ENCODE measurements at regions of chr1 and their contacts with region 1.

Region 1: DNA sequence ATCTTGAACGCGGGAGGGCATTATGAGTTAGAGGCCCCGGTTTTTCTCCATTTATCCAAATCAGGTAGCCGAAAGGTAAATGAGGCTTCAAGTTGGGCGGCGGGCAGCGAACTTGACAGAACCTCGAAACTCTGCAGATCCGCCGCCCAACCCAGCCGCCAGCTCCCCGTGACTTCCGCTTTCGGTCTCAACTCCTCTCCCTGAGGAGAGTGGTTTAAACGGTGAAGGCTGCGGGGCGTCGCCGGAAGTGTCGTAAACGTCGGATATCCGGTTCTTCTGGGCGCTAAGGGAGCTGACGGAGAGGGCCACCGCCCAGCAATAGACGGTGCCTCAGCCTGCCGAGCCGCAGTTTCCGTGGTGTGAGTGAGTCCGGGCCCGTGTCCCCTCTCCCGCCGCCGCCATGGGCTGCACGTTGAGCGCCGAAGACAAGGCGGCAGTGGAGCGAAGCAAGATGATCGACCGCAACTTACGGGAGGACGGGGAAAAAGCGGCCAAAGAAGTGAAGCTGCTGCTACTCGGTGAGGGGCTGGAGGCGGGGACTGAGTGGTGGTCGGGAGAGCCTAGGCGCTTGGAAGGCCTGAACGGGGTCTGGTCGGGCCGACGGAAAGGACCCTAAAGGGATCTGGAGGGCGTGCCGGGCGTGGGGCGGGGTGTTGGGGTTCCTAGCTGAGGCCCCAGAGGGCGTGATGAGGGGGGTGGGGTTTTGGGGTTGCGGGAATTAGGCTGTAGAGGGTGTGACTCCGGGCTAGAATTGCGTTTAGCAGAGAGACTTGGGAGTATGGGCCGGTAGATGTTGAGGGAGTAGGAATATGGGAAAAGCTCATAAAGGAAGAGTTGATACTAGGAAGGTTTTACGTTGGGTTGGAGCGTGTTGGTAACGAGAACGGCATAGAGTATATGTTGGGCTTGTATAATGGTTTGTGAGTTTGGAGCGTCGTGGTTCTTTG is at the start of gene GNAI3:
- DNase-seq: peak; percentile 94 to 99 (median 97)
- H3K4me3 ChIP-seq: peak within 1 kb of the TSS; percentile 26 to 85 (median 66)
- H3K27ac ChIP-seq: peak within 1 kb of the TSS; percentile 79 to 94 (median 90)
- H3K4me1 ChIP-seq: peaks cover 11 to 45% of the 10 kb centered on the region in 2 donors
- H3K27me3 ChIP-seq: no peaks in the 10 kb centered on the region
- CTCF ChIP-seq: no peak
- POLR2A ChIP-seq: peak; percentile 98 to 99
- total RNA-seq, gene GNAI3: 2.8 to 12.0 (median 5.8) TPM

Region 2: GRCh38 chr1:109624201-109625010 is 75.8 kb after region 1 on chr1:
- intact Hi-C with region 1: loop called (anchors 5 kb)
- DNase-seq: peak in 3 of 7 donors; percentile 7 to 61 (median 25)
- H3K4me3 ChIP-seq: no peak overlapping the region
- H3K27ac ChIP-seq: peak overlapping the region in 2 of 5 donors; percentile 59 to 67
- H3K4me1 ChIP-seq: peaks cover 12 to 42% of the 10 kb centered on the region in 2 donors
- H3K27me3 ChIP-seq: no peaks in the 10 kb centered on the region
- CTCF ChIP-seq: no peak
- POLR2A ChIP-seq: no peak

Region 3: GRCh38 chr1:109739738-109740660 is 191.4 kb after region 1 on chr1:
- intact Hi-C with region 1: no loop called
- DNase-seq: peak; percentile 55 to 89 (median 78)
- H3K4me3 ChIP-seq: peak overlapping the region; percentile 2 to 82 (median 36)
- H3K27ac ChIP-seq: peak overlapping the region in 3 of 5 donors; percentile 53 to 77 (median 70)
- H3K4me1 ChIP-seq: peaks cover 0 to 18% of the 10 kb centered on the region in 2 donors
- H3K27me3 ChIP-seq: no peaks in the 10 kb centered on the region
- CTCF ChIP-seq: no peak
- POLR2A ChIP-seq: peak; percentile 70 to 87

Region 4: GRCh38 chr1:109773146-109773899 is 224.7 kb after region 1 on chr1:
- intact Hi-C with region 1: loop called (anchors 2 to 10 kb)
- DNase-seq: peak; percentile 82 to 96 (median 90)
- H3K4me3 ChIP-seq: no peak overlapping the region
- H3K27ac ChIP-seq: no peak overlapping the region
- H3K4me1 ChIP-seq: no peaks in the 10 kb centered on the region
- H3K27me3 ChIP-seq: no peaks in the 10 kb centered on the region
- CTCF ChIP-seq: peak; percentile 74 to 97 (median 92)
- POLR2A ChIP-seq: no peak